Heart right ventricle (tissue), 16 donors: ENCODE measurements at regions of chr16 and their contacts with region 1.

Region 1: GRCh38 chr16:22190776-22191531 is 15.1 kb upstream of the EEF2K start:
- DNase-seq: peak; percentile 99 to 100
- ATAC-seq: peak; percentile 72 to 90 (median 86)
- H3K4me3 ChIP-seq: peak overlapping the region; percentile 16 to 86 (median 74)
- H3K27ac ChIP-seq: peak overlapping the region; percentile 91 to 98 (median 96)
- H3K4me1 ChIP-seq: peaks cover 8 to 47% (median 36%) of the 10 kb centered on the region in 9 donors
- H3K27me3 ChIP-seq: no peaks in the 10 kb centered on the region
- CTCF ChIP-seq: no peak

Region 2: GRCh38 chr16:20650400-20651166 is 1540.4 kb before region 1 on chr16:
- intact Hi-C with region 1: no loop called
- DNase-seq: no peak
- ATAC-seq: no peak
- H3K4me3 ChIP-seq: no peak overlapping the region
- H3K27ac ChIP-seq: no peak overlapping the region
- H3K4me1 ChIP-seq: no peaks in the 10 kb centered on the region
- H3K27me3 ChIP-seq: no peaks in the 10 kb centered on the region
- CTCF ChIP-seq: no peak

Region 3: GRCh38 chr16:21158208-21159110 is 1032.5 kb before region 1 on chr16 and contains the start of gene LDAF1:
- intact Hi-C with region 1: loop called in 1 of 10 experiments (anchors 10 kb)
- DNase-seq: peak; percentile 82 to 88
- ATAC-seq: peak; percentile 89 to 95 (median 92)
- H3K4me3 ChIP-seq: peak within 1 kb of the TSS; percentile 62 to 89 (median 85)
- H3K27ac ChIP-seq: peak within 1 kb of the TSS; percentile 65 to 95 (median 86)
- H3K4me1 ChIP-seq: peaks cover 10 to 59% (median 49%) of the 10 kb centered on the region in 9 donors
- H3K27me3 ChIP-seq: no peaks in the 10 kb centered on the region
- CTCF ChIP-seq: peak in 4 of 9 donors; percentile 7 to 26 (median 16)
- total RNA-seq, gene LDAF1: 116 to 182 (median 143) TPM

Region 4: DNA sequence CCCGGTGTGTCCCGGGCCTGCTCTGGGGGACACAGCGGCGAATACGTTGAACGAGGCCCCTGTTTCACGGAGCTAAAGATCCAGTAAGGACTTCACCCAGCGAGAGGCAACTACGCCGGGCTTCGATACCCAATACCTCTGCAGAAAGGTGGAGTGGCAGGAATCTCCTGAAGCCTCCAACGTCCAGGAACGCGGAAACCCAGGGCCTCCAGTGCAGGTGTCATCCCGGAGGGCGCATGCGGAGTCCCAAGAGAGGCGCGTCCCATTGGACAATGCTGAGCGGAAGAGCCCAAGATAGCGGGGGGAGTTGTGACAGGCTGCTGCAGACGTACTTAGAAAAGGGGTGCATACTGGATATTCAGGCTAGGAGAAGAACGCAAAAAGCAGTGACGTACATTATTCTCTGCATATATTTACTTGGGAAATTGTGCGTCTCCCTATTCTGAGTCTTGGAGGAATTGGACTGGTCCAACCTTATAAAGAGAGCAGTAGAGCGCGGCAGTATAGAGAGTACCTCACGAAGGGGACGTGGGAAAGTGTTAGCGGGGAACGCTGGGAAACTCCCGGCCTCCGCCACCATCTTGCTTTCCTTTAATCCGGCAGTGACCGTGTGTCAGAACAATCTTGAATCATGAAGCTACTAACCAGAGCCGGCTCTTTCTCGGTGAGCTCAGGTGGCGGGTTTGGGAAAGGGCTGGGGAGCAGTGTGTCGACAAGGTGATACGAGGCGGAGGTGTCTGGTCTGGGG is 238.0 kb before region 1 on chr16 and contains the start of gene UQCRC2:
- intact Hi-C with region 1: loop called in 8 of 10 experiments (anchors 1 to 10 kb)
- DNase-seq: peak; percentile 85 to 93
- ATAC-seq: peak; percentile 95 to 98 (median 97)
- H3K4me3 ChIP-seq: peak within 1 kb of the TSS; percentile 78 to 98 (median 88)
- H3K27ac ChIP-seq: peak within 1 kb of the TSS; percentile 86 to 99 (median 96)
- H3K4me1 ChIP-seq: peaks cover 3 to 70% (median 50%) of the 10 kb centered on the region in 9 donors
- H3K27me3 ChIP-seq: no peaks in the 10 kb centered on the region
- CTCF ChIP-seq: no peak
- total RNA-seq, gene UQCRC2: 648 to 1,183 (median 997) TPM

Region 5: DNA sequence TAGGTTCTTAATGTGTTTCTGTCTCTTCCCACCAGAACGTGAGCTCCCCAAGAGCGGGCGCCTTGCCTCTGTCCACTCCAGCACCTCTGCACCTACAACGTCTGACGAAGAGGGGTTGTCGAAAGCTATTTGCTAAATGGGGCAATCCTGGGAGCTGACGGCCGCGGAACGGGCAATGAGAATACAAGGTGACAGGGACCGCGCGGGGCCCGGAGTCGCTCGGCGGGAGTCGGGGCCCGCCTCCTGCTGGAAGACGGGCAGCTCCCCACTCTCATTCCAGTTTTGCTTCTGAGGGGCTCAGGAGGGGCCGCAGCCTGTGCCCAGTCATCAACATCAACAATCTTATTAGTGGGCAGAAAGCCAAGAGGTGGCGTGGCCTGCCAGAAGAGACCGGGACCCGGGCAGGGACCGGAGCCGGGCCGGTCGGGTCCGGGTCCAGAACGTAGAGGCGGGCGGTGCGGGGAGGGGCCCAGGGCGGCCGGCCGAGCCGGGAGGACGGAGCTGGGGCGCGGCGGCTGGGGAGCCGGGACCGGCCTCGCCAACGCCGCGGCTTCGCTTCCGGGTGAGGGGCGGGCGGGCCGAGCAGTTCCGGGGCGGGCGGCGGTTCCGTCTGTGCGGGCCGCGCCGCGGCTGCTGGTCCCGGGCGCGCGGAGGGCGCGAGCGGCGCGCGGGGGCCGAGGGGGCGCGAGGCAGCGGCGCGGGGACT is 183.3 kb before region 1 on chr16 and contains the start of gene MOSMO:
- intact Hi-C with region 1: loop called in 6 of 10 experiments (anchors 2 to 5 kb)
- DNase-seq: peak; percentile 74 to 83
- ATAC-seq: peak; percentile 85 to 97 (median 94)
- H3K4me3 ChIP-seq: peak within 1 kb of the TSS; percentile 58 to 100 (median 96)
- H3K27ac ChIP-seq: peak within 1 kb of the TSS; percentile 33 to 97 (median 90)
- H3K4me1 ChIP-seq: peaks cover 0 to 44% (median 32%) of the 10 kb centered on the region in 9 donors
- H3K27me3 ChIP-seq: no peaks in the 10 kb centered on the region
- CTCF ChIP-seq: peak in 3 of 9 donors; percentile 8 to 31 (median 27)
- total RNA-seq, gene MOSMO: 9.8 to 13.0 (median 11.3) TPM

Region 6: DNA sequence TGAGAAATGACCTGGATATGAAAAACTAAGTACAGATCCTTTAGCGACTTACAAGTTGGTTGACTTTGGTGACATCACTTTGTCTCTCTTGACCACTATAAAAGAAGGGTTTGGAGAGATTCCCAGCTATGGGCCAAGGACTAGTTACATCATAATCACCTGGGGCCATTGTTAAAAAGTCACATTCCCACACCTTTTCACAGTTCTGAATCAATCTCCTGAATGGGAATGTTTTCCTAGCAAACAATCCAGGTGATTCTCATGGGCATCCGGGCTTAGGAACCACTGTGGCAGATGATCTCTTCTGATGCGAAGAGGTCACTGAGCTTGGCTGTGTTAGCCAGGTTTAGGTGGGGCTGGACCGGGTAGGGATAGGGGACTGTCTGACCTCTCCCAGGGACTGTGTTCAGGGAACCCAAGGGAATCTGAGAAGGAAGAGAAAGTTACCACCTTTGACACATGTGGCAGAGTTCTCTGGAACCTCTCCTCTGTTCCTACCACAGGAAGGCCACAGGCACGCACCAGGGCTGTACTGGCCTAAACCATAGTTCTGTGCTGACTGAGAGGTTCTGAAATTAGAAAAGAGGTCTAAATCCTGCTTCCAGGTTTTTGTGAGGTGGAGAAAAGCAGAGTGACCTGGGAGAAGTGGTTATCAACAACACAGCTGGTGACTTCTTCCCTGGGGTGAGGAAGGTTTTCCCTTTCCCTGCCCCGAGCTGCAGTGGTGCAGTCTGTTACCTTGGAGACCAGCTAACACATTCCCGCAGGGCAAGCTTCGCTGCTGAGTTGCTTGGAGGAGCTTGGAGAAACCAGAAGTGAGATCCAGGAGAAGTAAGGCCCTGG is 99.0 kb before region 1 on chr16 and contains the start of gene VWA3A:
- intact Hi-C with region 1: loop called in 2 of 10 experiments (anchors 5 to 10 kb)
- DNase-seq: no peak
- ATAC-seq: peak in 7 of 8 donors; percentile 56 to 82 (median 69)
- H3K4me3 ChIP-seq: no peak within 1 kb of the TSS
- H3K27ac ChIP-seq: peak within 1 kb of the TSS in 2 of 10 donors; percentile 40 to 51
- H3K4me1 ChIP-seq: peaks cover 0 to 28% (median 6%) of the 10 kb centered on the region in 9 donors
- H3K27me3 ChIP-seq: peaks cover 0 to 2% (median 0%) of the 10 kb centered on the region in 7 donors
- CTCF ChIP-seq: no peak
- total RNA-seq, gene VWA3A: 0.25 to 1.1 (median 0.31) TPM in 9 of 10 donors, not detected in the other

Region 7: DNA sequence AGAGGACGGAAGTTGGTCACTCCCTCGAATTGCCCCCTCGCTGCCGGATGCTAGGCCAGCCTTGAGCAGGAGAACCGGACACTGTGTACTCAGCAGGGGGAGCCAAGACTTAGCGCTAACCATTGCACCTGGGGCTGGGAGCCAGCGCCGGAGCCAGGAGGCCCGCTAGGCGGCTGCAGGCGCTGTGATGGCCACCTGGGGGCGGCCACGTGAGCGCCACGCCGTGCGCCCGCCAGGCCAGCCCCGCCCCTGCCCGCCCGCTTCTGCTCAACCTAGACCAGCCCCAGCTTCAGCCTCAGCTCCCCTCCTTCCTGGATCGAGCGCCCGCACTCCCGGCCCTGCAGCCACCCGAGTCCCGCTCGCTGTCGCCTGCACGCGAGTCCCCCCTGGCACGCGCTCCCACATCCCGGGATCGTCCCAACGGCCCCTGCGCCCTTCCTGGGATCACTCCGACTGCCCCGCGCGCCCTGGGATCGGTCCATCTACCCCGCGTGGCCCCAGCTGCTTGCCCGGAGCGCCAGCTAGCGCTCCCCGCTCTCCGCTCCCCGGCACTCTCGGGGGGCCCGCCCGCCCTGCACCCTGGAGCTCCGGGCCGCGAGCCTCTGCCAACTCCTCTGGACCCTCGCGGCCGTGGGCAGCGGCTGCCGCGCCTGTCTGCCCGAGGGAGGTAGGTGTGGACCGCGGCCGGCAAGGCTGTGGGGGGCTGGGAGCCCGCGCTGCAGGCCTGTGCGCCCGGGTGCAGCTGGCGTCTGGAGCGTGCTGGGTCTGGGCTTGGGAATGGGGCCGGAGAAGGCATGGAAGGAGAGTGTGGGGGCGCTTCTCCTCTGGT is 15.3 kb after region 1 on chr16 and contains the start of gene EEF2K:
- intact Hi-C with region 1: loop called in 1 of 10 experiments (anchors 1 kb)
- DNase-seq: peak; percentile 90 to 93
- ATAC-seq: peak; percentile 91 to 96 (median 94)
- H3K4me3 ChIP-seq: peak within 1 kb of the TSS; percentile 74 to 97 (median 88)
- H3K27ac ChIP-seq: peak within 1 kb of the TSS; percentile 84 to 97 (median 92)
- H3K4me1 ChIP-seq: peaks cover 0 to 52% (median 29%) of the 10 kb centered on the region in 9 donors
- H3K27me3 ChIP-seq: no peaks in the 10 kb centered on the region
- CTCF ChIP-seq: peak; percentile 74 to 96 (median 91)
- total RNA-seq, gene EEF2K: 17.2 to 38.9 (median 23.2) TPM

Region 8: DNA sequence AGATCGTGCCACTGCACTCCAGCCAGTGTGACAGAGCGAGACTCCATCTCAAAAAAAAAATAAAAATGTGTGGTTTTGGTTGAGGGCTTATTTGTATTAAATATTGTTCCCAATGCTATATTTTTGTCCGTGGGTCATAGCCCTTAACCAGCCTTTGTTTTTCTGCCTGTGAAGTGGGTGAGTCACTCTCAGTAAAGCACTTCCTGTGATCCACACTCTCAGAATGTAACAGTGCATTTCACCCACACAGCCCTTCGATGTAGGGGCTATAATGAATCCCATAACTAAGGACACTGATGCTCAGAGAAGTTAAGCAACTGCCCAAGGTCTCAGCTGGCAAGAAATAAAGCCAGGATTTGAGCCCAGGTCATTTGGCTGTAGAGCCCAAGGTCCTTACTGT is 71.5 kb after region 1 on chr16:
- intact Hi-C with region 1: no loop called
- DNase-seq: no peak
- ATAC-seq: no peak
- H3K4me3 ChIP-seq: no peak overlapping the region
- H3K27ac ChIP-seq: no peak overlapping the region
- H3K4me1 ChIP-seq: no peaks in the 10 kb centered on the region
- H3K27me3 ChIP-seq: no peaks in the 10 kb centered on the region
- CTCF ChIP-seq: no peak

Region 9: GRCh38 chr16:22374311-22375116 is 183.6 kb after region 1 on chr16 and contains the start of gene CDR2:
- intact Hi-C with region 1: loop called in 2 of 10 experiments (anchors 5 to 10 kb)
- DNase-seq: peak; percentile 98 to 99
- ATAC-seq: peak; percentile 96 to 99 (median 97)
- H3K4me3 ChIP-seq: peak within 1 kb of the TSS; percentile 83 to 97 (median 95)
- H3K27ac ChIP-seq: peak within 1 kb of the TSS; percentile 64 to 91 (median 86)
- H3K4me1 ChIP-seq: peaks cover 6 to 54% (median 34%) of the 10 kb centered on the region in 9 donors
- H3K27me3 ChIP-seq: no peaks in the 10 kb centered on the region
- CTCF ChIP-seq: no peak
- total RNA-seq, gene CDR2: 4.2 to 8.1 (median 6.6) TPM